Colonic mucosa (tissue), 4 donors: ENCODE measurements at regions of chr20 and their contacts with region 1.

Region 1: DNA sequence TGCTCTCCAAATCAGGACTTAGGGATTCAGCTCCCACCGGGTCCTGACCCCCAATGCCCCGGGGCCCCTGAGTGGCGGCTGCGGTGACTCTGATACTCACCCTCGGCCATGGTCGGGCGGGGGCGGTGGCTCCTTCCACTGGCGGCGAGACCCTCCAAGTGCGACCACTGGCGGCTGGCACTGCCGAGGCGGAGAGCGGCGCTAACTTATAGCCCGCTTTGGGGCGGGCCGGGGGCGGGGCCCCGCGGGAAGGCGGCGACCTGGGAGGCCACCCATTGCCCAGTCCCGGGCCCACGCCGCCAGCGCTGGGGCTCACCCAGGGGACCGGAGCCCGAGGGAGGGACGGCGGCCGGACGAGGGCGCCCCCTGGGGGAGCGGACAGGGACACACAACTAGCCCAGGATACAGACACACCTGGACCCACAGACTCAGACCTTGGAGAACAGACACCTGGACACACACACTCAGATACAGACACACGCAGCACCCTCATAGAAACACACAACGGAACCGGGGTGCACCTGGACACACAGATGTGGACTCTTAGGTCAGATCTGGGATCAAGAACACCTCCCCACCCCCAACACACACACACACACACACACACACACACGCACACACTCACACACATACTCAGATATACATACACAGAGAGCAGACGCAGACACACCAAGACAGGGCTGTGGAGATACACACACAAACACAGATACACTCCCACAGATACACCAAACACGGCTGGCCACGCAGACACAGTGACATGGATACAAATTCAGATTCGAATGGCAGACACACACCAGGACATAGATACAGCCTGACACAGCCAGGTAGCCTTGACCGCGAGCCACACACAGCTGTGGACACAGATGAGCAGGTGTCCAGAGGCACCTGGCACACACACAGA is at the start of gene TGM2:
- DNase-seq: peak; percentile 75
- H3K4me3 ChIP-seq: peak within 1 kb of the TSS; percentile 41
- H3K27ac ChIP-seq: peak within 1 kb of the TSS; percentile 44
- H3K4me1 ChIP-seq: no peaks in the 10 kb centered on the region
- H3K27me3 ChIP-seq: no peaks in the 10 kb centered on the region
- CTCF ChIP-seq: peak; percentile 86
- total RNA-seq, gene TGM2: 14.5 to 32.8 TPM

Region 2: DNA sequence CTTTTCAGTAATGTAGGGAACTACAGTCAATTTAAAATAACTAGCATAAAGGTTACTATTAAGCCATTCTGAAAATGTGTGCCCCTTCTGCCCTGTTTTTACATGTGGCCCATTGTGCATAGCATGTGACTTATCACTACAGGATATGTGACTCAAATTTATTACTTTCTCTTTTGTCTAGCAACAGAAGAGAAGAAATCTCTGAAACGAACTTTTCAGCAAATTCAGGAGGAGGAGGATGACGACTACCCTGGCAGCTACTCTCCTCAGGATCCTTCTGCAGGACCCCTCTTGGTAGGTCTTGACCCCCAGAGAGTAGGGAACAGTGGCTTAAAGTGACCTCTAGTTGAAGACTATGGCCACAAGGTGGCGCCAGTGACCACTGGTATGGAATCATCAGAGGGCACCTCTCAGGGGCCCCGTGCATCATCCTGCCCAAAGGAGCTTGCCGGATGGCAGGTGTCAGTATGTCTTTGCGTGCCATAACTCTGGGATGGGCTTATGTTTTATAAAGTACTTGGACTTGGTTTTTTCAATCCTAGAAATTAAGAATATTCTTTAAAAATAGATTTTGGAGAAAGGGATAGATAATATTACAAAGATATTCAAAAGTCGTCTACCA is 107.9 kb before region 1 on chr20:
- intact Hi-C with region 1: loop called (anchors 5 kb)
- DNase-seq: peak; percentile 84
- H3K4me3 ChIP-seq: no peak overlapping the region
- H3K27ac ChIP-seq: no peak overlapping the region
- H3K4me1 ChIP-seq: peaks cover 4% of the 10 kb centered on the region
- H3K27me3 ChIP-seq: no peaks in the 10 kb centered on the region
- CTCF ChIP-seq: peak; percentile 87

Region 3: GRCh38 chr20:38073307-38074071 is 91.8 kb before region 1 on chr20:
- intact Hi-C with region 1: loop called (anchors 5 kb)
- DNase-seq: peak; percentile 74
- H3K4me3 ChIP-seq: no peak overlapping the region
- H3K27ac ChIP-seq: peak overlapping the region; percentile 49
- H3K4me1 ChIP-seq: no peaks in the 10 kb centered on the region
- H3K27me3 ChIP-seq: no peaks in the 10 kb centered on the region
- CTCF ChIP-seq: peak; percentile 74

Region 4: GRCh38 chr20:38113401-38114325 is 51.7 kb before region 1 on chr20:
- intact Hi-C with region 1: loop called (anchors 5 kb)
- DNase-seq: peak; percentile 56
- H3K4me3 ChIP-seq: no peak overlapping the region
- H3K27ac ChIP-seq: no peak overlapping the region
- H3K4me1 ChIP-seq: peaks cover 14% of the 10 kb centered on the region
- H3K27me3 ChIP-seq: no peaks in the 10 kb centered on the region
- CTCF ChIP-seq: no peak